Sciatic nerve (tissue), 2 donors: ENCODE measurements at regions of chr13 and their contacts with region 1.

Region 1: GRCh38 chr13:45807520-45808099 is 43.9 kb downstream of the SIAH3 start:
- DNase-seq: no peak
- ATAC-seq: peak; percentile 51

Region 2: GRCh38 chr13:45928843-45929242 is 121.2 kb after region 1 on chr13:
- intact Hi-C with region 1: no loop called
- DNase-seq: no peak
- ATAC-seq: no peak

Region 3: DNA sequence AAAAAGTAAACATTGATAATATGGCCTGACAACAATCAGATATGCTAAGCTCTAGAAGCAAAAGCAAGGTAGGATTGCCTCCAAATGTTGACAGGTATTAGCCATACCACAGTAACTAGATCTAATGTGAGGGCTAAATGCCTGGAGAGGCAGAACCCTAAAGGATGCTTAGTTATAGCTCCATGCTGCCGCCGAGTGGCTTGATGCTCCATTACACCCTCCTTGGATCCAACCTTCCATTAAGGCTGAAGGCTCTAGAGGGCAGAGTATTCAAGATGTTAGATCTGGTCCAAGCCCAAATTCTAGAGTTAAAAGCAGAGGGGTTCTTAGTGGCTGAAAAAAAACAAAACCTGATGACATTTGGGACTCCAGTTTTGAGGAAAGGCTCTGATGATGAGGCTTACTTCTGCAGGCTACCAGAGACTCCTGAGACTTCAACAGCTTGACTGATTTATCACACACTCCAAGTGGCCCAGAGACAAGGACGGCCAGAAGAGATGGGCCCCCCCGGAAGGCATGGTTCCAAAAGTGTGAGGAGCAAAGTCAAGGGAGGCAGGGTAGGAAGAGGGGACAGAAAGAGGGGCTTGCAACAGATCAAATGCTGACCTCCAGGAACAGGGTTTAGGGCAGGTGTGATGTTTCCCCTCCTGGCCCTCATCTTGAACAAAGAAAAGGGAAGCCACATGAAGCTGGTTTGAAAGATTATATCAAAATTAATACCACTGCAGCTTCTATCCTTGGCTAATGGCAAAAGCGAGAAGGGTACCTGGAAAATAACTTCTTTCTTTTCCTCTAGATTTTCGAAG is 319.1 kb after region 1 on chr13:
- intact Hi-C with region 1: no loop called
- DNase-seq: peak; percentile 73
- ATAC-seq: peak; percentile 83

Region 4: GRCh38 chr13:47539317-47539716 is 1731.7 kb after region 1 on chr13:
- intact Hi-C with region 1: loop called (anchors 5 kb)
- DNase-seq: no peak
- ATAC-seq: no peak